A673 (cell line): ENCODE measurements at regions of chr6 and their contacts with region 1.

Region 1: GRCh38 chr6:89432875-89433251 is at the start of gene ANKRD6:
- DNase-seq: peak; percentile 83
- H3K4me3 ChIP-seq: peak within 1 kb of the TSS; percentile 83
- H3K27ac ChIP-seq: peak within 1 kb of the TSS; percentile 81
- H3K4me1 ChIP-seq: peaks cover 55% of the 10 kb centered on the region
- H3K27me3 ChIP-seq: no peaks in the 10 kb centered on the region
- CTCF ChIP-seq: peak; percentile 70
- total RNA-seq, gene ANKRD6: 25.4 and 36.4 TPM in 2 replicates

Region 2: DNA sequence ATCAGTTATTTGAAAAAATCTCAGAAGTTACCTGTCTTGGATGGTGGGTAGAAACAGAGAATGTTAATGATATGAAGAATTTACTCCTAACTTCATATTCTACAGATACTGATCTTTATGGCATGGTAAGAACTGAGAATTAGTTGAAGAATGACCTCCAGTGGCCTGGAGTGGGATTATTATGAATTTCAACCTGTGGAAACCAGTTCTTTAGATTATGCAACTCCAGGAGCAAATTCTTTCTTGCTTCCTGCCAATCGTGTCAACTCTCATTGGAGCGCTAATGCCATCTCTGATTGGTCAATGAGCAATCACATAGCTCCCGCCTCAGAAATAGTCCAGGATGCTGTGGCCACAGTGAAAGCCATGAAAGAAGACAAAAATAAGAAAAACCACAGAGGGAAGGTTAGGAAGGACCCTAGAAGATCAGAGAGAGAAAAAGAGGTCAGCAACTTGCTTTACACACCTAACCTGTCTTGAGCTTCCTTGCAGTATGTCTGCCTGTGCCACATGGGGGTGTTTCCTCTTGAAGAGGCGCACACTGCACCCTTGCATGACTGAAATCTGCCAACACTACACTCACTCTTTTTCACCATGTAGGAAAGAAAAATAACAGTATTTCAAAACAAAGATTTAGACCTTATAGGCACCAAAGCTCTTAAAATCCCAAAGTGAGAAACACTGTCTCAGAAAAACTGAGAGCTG is 165.3 kb after region 1 on chr6:
- CTCF ChIA-PET with region 1: no interaction called
- POLR2A ChIA-PET with region 1: no interaction called
- intact Hi-C with region 1: loop called (anchors 5 kb)
- DNase-seq: peak; percentile 63
- H3K4me3 ChIP-seq: no peak overlapping the region
- H3K27ac ChIP-seq: no peak overlapping the region
- H3K4me1 ChIP-seq: no peaks in the 10 kb centered on the region
- H3K27me3 ChIP-seq: no peaks in the 10 kb centered on the region
- CTCF ChIP-seq: peak; percentile 40; the same call in 1 of the 2 replicates